ENCODE measurements at regions of chr3 and their contacts with region 1.

Region 1: DNA sequence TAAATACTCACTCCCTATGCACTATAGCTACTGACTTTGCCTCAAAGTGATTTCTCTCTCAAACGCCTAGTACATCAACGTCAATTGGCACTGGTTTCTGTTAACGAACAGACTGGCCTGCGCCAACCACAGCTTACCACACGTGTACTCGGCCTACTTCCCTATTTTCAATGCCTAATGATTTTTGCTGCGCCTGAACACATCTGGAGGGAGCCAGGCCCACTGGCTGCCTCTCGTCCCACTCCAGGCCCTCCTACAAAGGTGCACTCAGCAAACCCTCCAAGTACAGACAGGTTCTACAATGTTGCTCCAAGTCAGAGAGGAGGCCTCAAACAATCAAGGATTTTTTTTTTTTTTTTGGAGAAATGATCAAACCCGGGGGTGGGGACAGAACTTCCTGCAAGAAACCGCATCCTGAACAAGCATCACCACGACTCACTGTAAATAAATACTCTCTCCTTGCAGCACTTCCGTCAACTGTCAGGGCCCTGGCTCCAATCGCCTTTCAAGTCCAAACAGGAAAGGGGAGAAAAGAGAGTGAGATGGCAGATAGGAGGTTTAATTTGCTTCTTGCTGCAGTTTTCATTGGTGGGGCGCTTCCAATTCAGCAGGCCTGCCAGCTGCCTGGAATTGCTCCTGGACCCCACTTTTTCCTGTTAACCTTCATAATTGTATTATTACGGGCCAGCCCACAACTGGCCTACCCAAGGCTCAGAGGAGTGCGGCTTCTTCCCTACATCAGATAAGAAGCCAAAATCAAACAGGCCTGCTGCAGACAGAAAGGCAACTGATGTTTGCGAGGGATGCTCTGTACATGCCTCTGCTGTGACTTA is 139.3 kb downstream of the FOXP1 start:
- DNase-seq: peak; percentile 80
- H3K4me3 Mint-ChIP-seq: peak overlapping the region; percentile 71
- H3K27ac Mint-ChIP-seq: peak overlapping the region; percentile 98
- H3K4me1 Mint-ChIP-seq: peaks cover 93% of the 10 kb centered on the region
- H3K27me3 Mint-ChIP-seq: no peaks in the 10 kb centered on the region

Region 2: GRCh38 chr3:70120357-70121121 is 1323.7 kb before region 1 on chr3:
- CTCF ChIA-PET with region 1: no interaction called
- intact Hi-C with region 1: no loop called
- DNase-seq: peak; percentile 84
- H3K4me3 Mint-ChIP-seq: no peak overlapping the region
- H3K27ac Mint-ChIP-seq: no peak overlapping the region
- H3K4me1 Mint-ChIP-seq: peaks cover 2% of the 10 kb centered on the region
- H3K27me3 Mint-ChIP-seq: peaks cover 8% of the 10 kb centered on the region

Region 3: DNA sequence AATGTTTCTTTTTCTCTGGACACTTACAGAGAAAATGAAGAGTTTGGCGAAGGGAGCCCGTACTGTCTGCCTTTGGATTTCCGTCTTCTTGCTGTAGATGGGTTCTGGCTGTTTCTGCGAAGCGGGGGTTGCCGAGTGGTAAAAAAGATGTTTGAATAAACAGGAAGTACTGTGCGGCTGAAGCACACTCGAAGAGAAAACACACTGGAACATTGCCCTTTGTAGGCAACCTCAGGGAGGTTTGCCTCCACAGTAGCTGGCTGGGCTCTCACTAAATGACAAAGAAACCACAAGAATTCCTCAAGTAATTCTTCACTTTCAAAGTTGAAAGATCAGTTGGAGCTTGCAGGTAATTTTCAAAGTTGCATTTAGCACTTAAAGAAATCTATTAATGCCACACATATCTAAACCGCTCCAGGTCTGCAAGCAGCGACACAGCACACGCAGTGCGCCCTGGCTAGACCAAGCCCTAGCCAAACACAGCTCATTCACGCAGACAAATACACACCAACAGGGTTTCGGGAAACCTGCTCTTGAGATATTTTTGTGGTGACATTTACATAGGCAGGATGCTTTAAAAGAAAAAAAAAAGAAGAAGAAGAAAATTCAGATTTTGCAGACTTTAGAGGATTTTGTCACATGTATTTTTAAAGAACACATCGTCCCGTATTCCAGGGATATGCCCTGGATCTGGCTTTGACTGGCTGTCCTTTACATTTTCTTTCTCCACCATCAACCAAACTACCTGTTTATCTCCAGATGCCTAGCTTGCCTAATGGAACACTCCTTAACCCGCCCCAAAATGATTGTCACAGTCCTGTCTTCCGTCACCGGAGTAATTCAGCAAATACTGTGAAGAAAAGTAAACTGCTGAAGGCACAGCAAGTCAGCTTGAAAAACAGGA is 313.5 kb before region 1 on chr3:
- CTCF ChIA-PET with region 1: interaction called, 4 read pairs
- intact Hi-C with region 1: loop called (anchors 5 kb)
- DNase-seq: peak; percentile 82
- H3K4me3 Mint-ChIP-seq: peak overlapping the region; percentile 88
- H3K27ac Mint-ChIP-seq: peak overlapping the region; percentile 96
- H3K4me1 Mint-ChIP-seq: peaks cover 66% of the 10 kb centered on the region
- H3K27me3 Mint-ChIP-seq: no peaks in the 10 kb centered on the region

Region 4: GRCh38 chr3:71416876-71417275 is 27.4 kb before region 1 on chr3:
- CTCF ChIA-PET with region 1: interaction called, 10 read pairs
- intact Hi-C with region 1: loop called (anchors 1 kb)
- DNase-seq: peak; percentile 76
- H3K4me3 Mint-ChIP-seq: peak overlapping the region; percentile 69
- H3K27ac Mint-ChIP-seq: peak overlapping the region; percentile 39
- H3K4me1 Mint-ChIP-seq: peaks cover 89% of the 10 kb centered on the region
- H3K27me3 Mint-ChIP-seq: no peaks in the 10 kb centered on the region

Region 5: DNA sequence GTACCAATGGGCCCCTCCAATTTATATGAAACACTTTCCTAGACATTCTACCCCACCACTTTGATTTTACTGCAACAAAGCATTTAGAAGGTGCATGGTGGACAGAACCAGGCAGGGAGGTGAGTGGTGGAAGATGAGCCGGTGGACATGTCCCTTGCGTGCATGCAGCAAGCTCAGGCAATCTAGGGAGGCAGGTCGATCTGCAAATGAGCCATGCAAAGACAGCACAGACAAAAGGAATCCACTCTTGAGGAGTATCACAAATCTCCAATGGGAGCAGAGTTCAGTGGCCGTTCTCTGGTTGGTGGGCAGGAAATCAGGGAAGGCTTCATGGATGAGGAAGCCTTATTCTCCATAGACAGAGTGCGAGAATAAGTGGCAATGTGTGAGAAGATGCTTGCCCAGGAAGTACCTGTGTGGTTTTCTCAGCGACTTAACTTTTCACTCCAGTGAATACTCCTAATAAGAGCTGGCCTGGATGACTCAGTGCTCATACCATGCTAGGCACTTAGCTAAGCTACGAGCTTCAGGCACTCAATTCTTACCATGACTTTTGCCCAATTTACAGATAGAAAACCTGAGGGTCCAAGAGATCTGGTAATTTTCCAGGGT is 13.2 kb before region 1 on chr3:
- CTCF ChIA-PET with region 1: interaction called, 5 read pairs
- intact Hi-C with region 1: loop called (anchors 1 kb)
- DNase-seq: peak; percentile 53
- H3K4me3 Mint-ChIP-seq: no peak overlapping the region
- H3K27ac Mint-ChIP-seq: peak overlapping the region; percentile 86
- H3K4me1 Mint-ChIP-seq: peaks cover 83% of the 10 kb centered on the region
- H3K27me3 Mint-ChIP-seq: no peaks in the 10 kb centered on the region

Region 6: GRCh38 chr3:71478568-71478967 is 34.3 kb after region 1 on chr3:
- CTCF ChIA-PET with region 1: interaction called, 4 read pairs
- intact Hi-C with region 1: loop called (anchors 1 kb)
- DNase-seq: peak; percentile 94
- H3K4me3 Mint-ChIP-seq: peak overlapping the region; percentile 38
- H3K27ac Mint-ChIP-seq: peak overlapping the region; percentile 96
- H3K4me1 Mint-ChIP-seq: peaks cover 85% of the 10 kb centered on the region
- H3K27me3 Mint-ChIP-seq: no peaks in the 10 kb centered on the region

Measured in activated naive CD4-positive, alpha-beta T cell treated with anti-CD3 and anti-CD28 coated beads for 36 hours (primary cell).